ENCODE measurements at regions of chr19 and their contacts with region 1.

Region 1: GRCh38 chr19:14775869-14776586 is 2.3 kb downstream of the ADGRE2 start:
- DNase-seq: peak in 1 of 2 experiments; percentile 60
- H3K4me3 ChIP-seq: peak overlapping the region; percentile 40 to 71 (median 48)
- H3K27ac ChIP-seq: no peak overlapping the region
- H3K4me1 ChIP-seq: peaks cover 0 to 4% (median 0%) of the 10 kb centered on the region in 4 experiments; a peak in 3 of 7 replicates
- H3K27me3 ChIP-seq: peaks cover 0 to 4% (median 0%) of the 10 kb centered on the region in 4 experiments; a peak in 1 of 7 replicates
- CTCF ChIP-seq: no peak
- EP300 ChIP-seq: no peak
- POLR2A ChIP-seq: peak in 1 of 2 experiments; percentile 1; a peak in 1 of 3 replicates
- RAD21 ChIP-seq: no peak

Region 2: DNA sequence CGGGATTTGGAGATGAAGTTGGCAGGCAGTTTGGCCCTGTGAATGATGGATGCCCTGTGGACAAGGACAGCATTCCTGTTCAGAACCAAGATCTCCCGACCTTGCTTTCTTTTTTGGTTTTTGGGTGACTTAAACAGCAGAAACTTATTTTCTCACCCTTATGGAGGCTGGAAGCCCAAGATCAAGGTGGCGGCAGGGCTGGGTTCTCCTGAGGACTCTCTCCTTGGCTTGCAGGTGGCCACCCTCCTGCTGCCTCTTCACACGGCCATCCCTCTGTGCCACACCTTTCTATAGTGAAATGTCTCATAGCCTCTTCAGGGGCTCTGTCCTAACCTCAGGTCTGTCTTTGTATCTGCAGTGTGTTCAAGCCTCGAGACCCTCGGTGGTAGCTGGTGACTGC is 72.2 kb before region 1 on chr19:
- CTCF ChIA-PET with region 1: no interaction called
- POLR2A ChIA-PET with region 1: no interaction called
- DNase-seq: no peak
- H3K4me3 ChIP-seq: no peak overlapping the region
- H3K27ac ChIP-seq: no peak overlapping the region
- H3K4me1 ChIP-seq: no peaks in the 10 kb centered on the region
- H3K27me3 ChIP-seq: no peaks in the 10 kb centered on the region
- CTCF ChIP-seq: no peak
- EP300 ChIP-seq: no peak
- POLR2A ChIP-seq: no peak
- RAD21 ChIP-seq: no peak

Region 3: DNA sequence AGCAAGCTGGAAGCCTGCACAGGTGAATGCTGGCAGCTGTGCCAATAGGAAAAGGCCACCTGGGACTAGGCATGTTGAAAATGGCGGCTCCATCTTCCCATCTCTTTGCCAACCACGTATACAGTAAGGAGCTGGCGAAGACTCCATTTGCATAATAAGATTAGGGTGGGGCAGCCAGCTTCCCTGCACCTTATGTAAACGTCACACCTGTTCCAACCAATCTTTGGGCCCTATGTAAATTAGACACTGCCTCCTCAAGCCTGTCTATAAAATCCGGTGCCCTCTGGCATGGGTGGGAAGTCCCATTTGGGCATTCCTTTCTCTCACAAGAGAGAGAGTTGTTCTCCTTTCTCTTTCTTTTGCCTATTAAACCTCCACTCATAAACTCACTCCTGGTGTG is 14.4 kb before region 1 on chr19:
- CTCF ChIA-PET with region 1: interaction called, 6 read pairs
- POLR2A ChIA-PET with region 1: interaction called, 18 read pairs
- DNase-seq: no peak
- H3K4me3 ChIP-seq: no peak overlapping the region
- H3K27ac ChIP-seq: no peak overlapping the region
- H3K4me1 ChIP-seq: no peaks in the 10 kb centered on the region; a peak in 3 of 7 replicates
- H3K27me3 ChIP-seq: no peaks in the 10 kb centered on the region
- CTCF ChIP-seq: no peak
- EP300 ChIP-seq: no peak
- POLR2A ChIP-seq: no peak
- RAD21 ChIP-seq: no peak

Region 4: GRCh38 chr19:14809272-14810057 is 33.4 kb after region 1 on chr19:
- CTCF ChIA-PET with region 1: no interaction called
- POLR2A ChIA-PET with region 1: no interaction called
- DNase-seq: no peak
- H3K4me3 ChIP-seq: no peak overlapping the region
- H3K27ac ChIP-seq: no peak overlapping the region
- H3K4me1 ChIP-seq: no peaks in the 10 kb centered on the region
- H3K27me3 ChIP-seq: no peaks in the 10 kb centered on the region
- CTCF ChIP-seq: no peak
- EP300 ChIP-seq: no peak
- POLR2A ChIP-seq: no peak
- RAD21 ChIP-seq: no peak

Measured in H1 (cell line).